ENCODE measurements at regions of chr10 and their contacts with region 1.

Region 1: GRCh38 chr10:70925377-70926225 is 37.2 kb upstream of the PCBD1 start:
- DNase-seq: peak; percentile 32
- H3K4me3 ChIP-seq: no peak overlapping the region
- H3K27ac ChIP-seq: no peak overlapping the region
- H3K4me1 ChIP-seq: no peaks in the 10 kb centered on the region
- H3K27me3 ChIP-seq: no peaks in the 10 kb centered on the region
- CTCF ChIP-seq: peak; percentile 96

Region 2: GRCh38 chr10:70656489-70656888 is 269.1 kb before region 1 on chr10:
- intact Hi-C with region 1: no loop called
- DNase-seq: no peak
- H3K4me3 ChIP-seq: no peak overlapping the region
- H3K27ac ChIP-seq: peak overlapping the region; percentile 2
- H3K4me1 ChIP-seq: no peaks in the 10 kb centered on the region
- H3K27me3 ChIP-seq: no peaks in the 10 kb centered on the region
- CTCF ChIP-seq: no peak

Region 3: GRCh38 chr10:71068861-71069271 is 143.3 kb after region 1 on chr10:
- intact Hi-C with region 1: loop called (anchors 10 kb)
- DNase-seq: no peak
- H3K4me3 ChIP-seq: no peak overlapping the region
- H3K27ac ChIP-seq: no peak overlapping the region
- H3K4me1 ChIP-seq: no peaks in the 10 kb centered on the region
- H3K27me3 ChIP-seq: no peaks in the 10 kb centered on the region
- CTCF ChIP-seq: no peak

Measured in colonic mucosa (tissue), 4 donors.